MCF 10A (cell line): ENCODE measurements at regions of chr9 and their contacts with region 1.

Region 1: DNA sequence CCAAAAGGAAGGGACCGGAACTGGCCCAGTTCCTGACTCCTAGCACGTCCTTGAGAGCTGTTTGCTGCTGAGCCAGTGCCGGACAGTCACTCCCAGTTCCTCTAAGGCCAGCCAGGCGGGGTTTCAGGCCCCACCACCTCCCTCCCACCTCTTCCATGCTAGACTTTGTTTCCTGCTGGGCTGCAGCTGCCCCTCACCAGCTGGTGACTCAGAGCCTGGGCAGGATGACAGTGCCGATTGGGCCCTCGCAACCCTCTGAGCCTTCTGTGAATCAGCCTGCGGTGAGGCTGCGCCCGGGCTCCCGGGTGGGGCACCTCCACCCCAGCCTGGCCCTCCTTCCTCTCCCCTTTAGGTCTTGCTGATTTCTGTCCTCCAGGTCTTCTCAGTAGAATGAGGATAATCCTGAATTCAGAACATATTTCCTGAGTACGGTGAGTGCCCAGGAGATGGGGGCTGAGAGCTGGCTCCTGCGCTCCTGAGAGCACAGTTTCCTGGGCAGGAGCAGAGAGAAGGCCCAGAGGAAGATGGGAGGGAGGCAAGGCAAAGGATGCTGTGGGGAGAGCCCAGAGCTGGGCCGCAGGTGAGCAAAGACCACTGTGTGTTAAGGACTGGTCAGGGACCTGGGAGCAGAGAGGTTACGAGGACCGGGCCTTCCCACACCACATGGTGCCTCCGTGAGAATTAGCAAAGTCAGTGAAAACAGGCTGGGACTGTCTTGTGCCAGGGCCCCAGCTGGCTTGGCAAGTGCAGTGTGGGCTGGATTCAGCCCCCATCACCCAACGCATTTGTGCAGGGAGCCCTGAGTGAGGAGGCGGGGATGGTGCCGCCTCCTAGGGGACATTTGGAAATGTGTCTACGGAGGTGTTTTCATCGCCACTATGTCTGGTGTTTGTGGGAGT is 32.9 kb upstream of the STXBP1 start:
- DNase-seq: peak; percentile 98
- H3K4me3 Mint-ChIP-seq: peak overlapping the region; percentile 71
- H3K27ac Mint-ChIP-seq: peak overlapping the region; percentile 76
- H3K4me1 Mint-ChIP-seq: peaks cover 39% of the 10 kb centered on the region
- H3K27me3 Mint-ChIP-seq: no peaks in the 10 kb centered on the region
- CTCF ChIP-seq: no peak

Region 2: GRCh38 chr9:127083138-127083980 is 495.8 kb before region 1 on chr9:
- CTCF ChIA-PET with region 1: no interaction called
- POLR2A ChIA-PET with region 1: no interaction called
- intact Hi-C with region 1: no loop called
- DNase-seq: no peak
- H3K4me3 Mint-ChIP-seq: no peak overlapping the region
- H3K27ac Mint-ChIP-seq: no peak overlapping the region
- H3K4me1 Mint-ChIP-seq: no peaks in the 10 kb centered on the region
- H3K27me3 Mint-ChIP-seq: no peaks in the 10 kb centered on the region
- CTCF ChIP-seq: no peak

Region 3: GRCh38 chr9:127463911-127464310 is 115.3 kb before region 1 on chr9:
- CTCF ChIA-PET with region 1: no interaction called
- POLR2A ChIA-PET with region 1: no interaction called
- intact Hi-C with region 1: no loop called
- DNase-seq: no peak
- H3K4me3 Mint-ChIP-seq: no peak overlapping the region
- H3K27ac Mint-ChIP-seq: no peak overlapping the region
- H3K4me1 Mint-ChIP-seq: no peaks in the 10 kb centered on the region
- H3K27me3 Mint-ChIP-seq: no peaks in the 10 kb centered on the region
- CTCF ChIP-seq: no peak

Region 4: GRCh38 chr9:127535834-127536233 is 43.4 kb before region 1 on chr9:
- CTCF ChIA-PET with region 1: interaction called, 3 read pairs
- POLR2A ChIA-PET with region 1: no interaction called
- intact Hi-C with region 1: loop called (anchors 2 kb)
- DNase-seq: no peak
- H3K4me3 Mint-ChIP-seq: no peak overlapping the region
- H3K27ac Mint-ChIP-seq: peak overlapping the region; percentile 67
- H3K4me1 Mint-ChIP-seq: peaks cover 22% of the 10 kb centered on the region
- H3K27me3 Mint-ChIP-seq: no peaks in the 10 kb centered on the region
- CTCF ChIP-seq: no peak

Region 5: DNA sequence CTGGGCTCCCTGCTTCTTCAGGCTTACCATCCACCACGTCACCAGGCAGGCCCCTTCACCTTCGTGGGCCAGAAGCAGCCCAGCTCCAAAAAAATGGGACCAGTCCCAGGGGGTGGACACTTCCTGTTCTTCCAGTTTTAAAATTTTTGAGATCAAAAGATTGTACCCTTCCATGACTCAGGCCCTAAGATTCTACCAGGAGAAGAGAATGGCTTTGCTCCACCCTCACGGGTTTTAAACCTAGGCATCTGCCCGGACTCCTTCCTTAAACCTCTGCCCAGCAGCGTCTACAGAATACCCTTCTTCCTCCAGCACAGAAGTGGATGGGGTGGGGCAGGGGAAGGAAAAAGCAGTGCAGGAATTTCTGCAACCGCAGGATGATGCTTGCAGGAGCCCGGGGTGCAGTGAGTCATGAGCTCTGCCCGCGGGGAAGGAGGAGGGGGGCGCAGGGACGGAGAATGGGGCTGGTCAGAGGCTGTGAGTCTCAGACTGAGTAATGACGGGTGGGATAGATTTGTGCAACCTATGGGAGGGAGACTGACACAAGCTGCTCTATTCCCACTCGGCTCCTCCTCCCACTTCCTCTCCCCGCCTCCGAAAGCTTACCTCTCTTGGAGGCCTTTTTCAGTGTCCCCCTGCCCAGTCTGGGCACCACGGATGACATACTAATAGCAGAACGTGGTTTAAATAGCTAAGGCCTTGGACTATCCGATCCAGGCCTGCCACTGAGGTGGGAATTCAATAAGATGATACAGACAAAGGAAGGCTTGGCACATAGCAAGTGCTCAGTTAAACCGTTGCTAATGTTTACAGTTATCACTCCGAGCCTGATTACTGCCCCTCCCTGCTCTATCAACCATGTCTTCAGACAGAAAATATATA is 17.3 kb before region 1 on chr9:
- CTCF ChIA-PET with region 1: interaction called, 12 read pairs
- POLR2A ChIA-PET with region 1: interaction called, 58 read pairs
- intact Hi-C with region 1: loop called (anchors 2 kb)
- DNase-seq: peak; percentile 99
- H3K4me3 Mint-ChIP-seq: peak overlapping the region; percentile 72
- H3K27ac Mint-ChIP-seq: peak overlapping the region; percentile 87
- H3K4me1 Mint-ChIP-seq: peaks cover 39% of the 10 kb centered on the region
- H3K27me3 Mint-ChIP-seq: no peaks in the 10 kb centered on the region
- CTCF ChIP-seq: no peak

Region 6: GRCh38 chr9:127983847-127984289 is 404.7 kb after region 1 on chr9:
- CTCF ChIA-PET with region 1: no interaction called
- POLR2A ChIA-PET with region 1: no interaction called
- intact Hi-C with region 1: no loop called
- DNase-seq: no peak
- H3K4me3 Mint-ChIP-seq: no peak overlapping the region
- H3K27ac Mint-ChIP-seq: no peak overlapping the region
- H3K4me1 Mint-ChIP-seq: peaks cover 23% of the 10 kb centered on the region
- H3K27me3 Mint-ChIP-seq: no peaks in the 10 kb centered on the region
- CTCF ChIP-seq: no peak